ENCODE measurements at regions of chr4 and their contacts with region 1.

Region 1: GRCh38 chr4:140252742-140253555 is 99.0 kb upstream of the MAML3 start:
- DNase-seq: peak; percentile 73
- CTCF ChIP-seq: peak; percentile 97

Region 2: GRCh38 chr4:140012688-140013486 is 240.1 kb before region 1 on chr4:
- in situ Hi-C with region 1: loop called (anchors 25 kb)
- DNase-seq: peak; percentile 26
- CTCF ChIP-seq: peak; percentile 15

Region 3: GRCh38 chr4:140388015-140388414 is 135.1 kb after region 1 on chr4:
- in situ Hi-C with region 1: no loop called
- DNase-seq: no peak
- CTCF ChIP-seq: no peak